Caco-2 (cell line): ENCODE measurements at regions of chr15 and their contacts with region 1.

Region 1: GRCh38 chr15:57561041-57561711 is 30.5 kb upstream of the MYZAP start:
- DNase-seq: peak; percentile 68 to 81
- H3K4me3 ChIP-seq: no peak overlapping the region
- H3K4me3 Mint-ChIP-seq: no peak overlapping the region
- H3K27ac Mint-ChIP-seq: no peak overlapping the region
- H3K4me1 ChIP-seq: peaks cover 11% of the 10 kb centered on the region
- H3K4me1 Mint-ChIP-seq: peaks cover 7% of the 10 kb centered on the region
- H3K27me3 ChIP-seq: no peaks in the 10 kb centered on the region
- H3K27me3 Mint-ChIP-seq: no peaks in the 10 kb centered on the region
- CTCF ChIP-seq: peak; percentile 81 to 85

Region 2: DNA sequence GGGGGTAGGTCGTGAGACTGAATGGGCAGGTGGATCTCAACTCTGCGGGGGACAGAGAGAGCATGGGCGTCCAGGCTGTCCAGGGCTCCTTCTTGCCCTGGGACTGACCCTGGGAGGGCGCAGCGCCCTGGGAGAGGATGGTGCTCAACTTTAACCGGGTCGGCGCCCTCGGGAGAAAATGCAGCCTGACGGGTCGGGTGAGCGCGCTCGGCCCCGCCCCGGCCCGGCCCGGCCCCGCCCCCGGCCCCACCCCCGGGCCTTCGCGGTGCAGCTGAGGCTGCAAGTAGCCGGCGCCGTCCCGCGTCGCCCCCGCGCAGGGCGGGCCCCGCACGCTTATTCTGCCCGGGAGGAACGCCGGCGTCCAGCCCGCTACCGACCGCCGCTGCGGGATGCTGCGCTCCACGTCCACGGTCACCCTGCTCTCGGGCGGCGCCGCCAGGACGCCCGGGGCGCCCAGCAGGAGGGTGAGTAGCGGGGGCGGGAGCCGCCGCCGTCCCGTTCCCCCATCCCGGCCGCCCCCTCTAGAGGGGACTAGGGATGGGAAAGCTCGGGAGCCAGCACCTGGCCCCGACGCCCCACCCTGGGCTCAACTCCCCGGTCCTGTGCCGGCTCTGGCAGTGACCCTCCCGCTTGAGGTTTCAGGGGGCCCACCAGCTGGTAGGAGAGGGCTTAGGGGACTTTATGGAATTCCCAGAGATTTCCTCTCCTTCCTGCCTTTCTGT is 30.6 kb after region 1 on chr15 and contains the start of gene MYZAP:
- CTCF ChIA-PET with region 1: interaction called, 3 read pairs
- POLR2A ChIA-PET with region 1: no interaction called
- intact Hi-C with region 1: loop called (anchors 1 kb)
- DNase-seq: peak; percentile 80 to 81
- H3K4me3 ChIP-seq: peak within 1 kb of the TSS; percentile 59
- H3K4me3 Mint-ChIP-seq: peak within 1 kb of the TSS; percentile 77
- H3K27ac Mint-ChIP-seq: no peak within 1 kb of the TSS
- H3K4me1 ChIP-seq: peaks cover 8% of the 10 kb centered on the region; the same call in 1 of the 2 replicates
- H3K4me1 Mint-ChIP-seq: peaks cover 19% of the 10 kb centered on the region
- H3K27me3 ChIP-seq: no peaks in the 10 kb centered on the region
- H3K27me3 Mint-ChIP-seq: no peaks in the 10 kb centered on the region
- CTCF ChIP-seq: no peak
- total RNA-seq, gene MYZAP: 4.3 and 6.4 TPM in 2 replicates

Region 3: DNA sequence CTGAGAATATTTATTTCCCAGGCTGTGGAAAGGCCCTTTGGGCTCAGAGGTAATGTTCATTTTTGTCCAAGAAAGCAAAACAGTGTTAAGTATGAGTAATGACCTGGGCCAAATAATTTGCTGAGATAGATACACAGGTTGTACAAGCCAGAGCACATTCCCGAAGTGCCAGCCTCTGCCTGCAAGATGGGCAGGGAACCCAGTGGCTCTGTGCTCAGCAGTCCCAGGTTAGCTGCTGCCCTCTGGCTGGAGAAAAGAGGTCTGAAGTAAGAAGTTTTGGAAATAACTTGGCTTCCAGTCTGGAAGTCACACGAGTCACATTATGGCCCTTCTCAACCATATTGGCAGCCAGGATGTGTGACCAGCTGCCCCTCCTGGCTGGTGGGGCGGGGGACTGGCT is 50.8 kb after region 1 on chr15:
- CTCF ChIA-PET with region 1: interaction called, 7 read pairs
- POLR2A ChIA-PET with region 1: no interaction called
- intact Hi-C with region 1: loop called (anchors 1 kb)
- DNase-seq: peak; percentile 38 to 39
- H3K4me3 ChIP-seq: no peak overlapping the region
- H3K4me3 Mint-ChIP-seq: no peak overlapping the region
- H3K27ac Mint-ChIP-seq: no peak overlapping the region
- H3K4me1 ChIP-seq: no peaks in the 10 kb centered on the region
- H3K4me1 Mint-ChIP-seq: no peaks in the 10 kb centered on the region
- H3K27me3 ChIP-seq: no peaks in the 10 kb centered on the region
- H3K27me3 Mint-ChIP-seq: no peaks in the 10 kb centered on the region
- CTCF ChIP-seq: peak in 1 of 2 experiments; percentile 21

Region 4: GRCh38 chr15:57640935-57641682 is 79.9 kb after region 1 on chr15:
- CTCF ChIA-PET with region 1: interaction called, 4 read pairs
- POLR2A ChIA-PET with region 1: no interaction called
- intact Hi-C with region 1: loop called (anchors 1 kb)
- DNase-seq: peak in 1 of 2 experiments; percentile 44
- H3K4me3 ChIP-seq: no peak overlapping the region
- H3K4me3 Mint-ChIP-seq: no peak overlapping the region
- H3K27ac Mint-ChIP-seq: no peak overlapping the region
- H3K4me1 ChIP-seq: no peaks in the 10 kb centered on the region
- H3K4me1 Mint-ChIP-seq: no peaks in the 10 kb centered on the region
- H3K27me3 ChIP-seq: no peaks in the 10 kb centered on the region
- H3K27me3 Mint-ChIP-seq: no peaks in the 10 kb centered on the region
- CTCF ChIP-seq: peak; percentile 38 to 65

Region 5: GRCh38 chr15:57655809-57656208 is 94.6 kb after region 1 on chr15:
- CTCF ChIA-PET with region 1: interaction called, 7 read pairs
- POLR2A ChIA-PET with region 1: no interaction called
- intact Hi-C with region 1: loop called (anchors 5 kb)
- DNase-seq: no peak
- H3K4me3 ChIP-seq: no peak overlapping the region
- H3K4me3 Mint-ChIP-seq: no peak overlapping the region
- H3K27ac Mint-ChIP-seq: no peak overlapping the region
- H3K4me1 ChIP-seq: no peaks in the 10 kb centered on the region
- H3K4me1 Mint-ChIP-seq: no peaks in the 10 kb centered on the region
- H3K27me3 ChIP-seq: no peaks in the 10 kb centered on the region
- H3K27me3 Mint-ChIP-seq: no peaks in the 10 kb centered on the region
- CTCF ChIP-seq: no peak

Region 6: GRCh38 chr15:57732526-57733331 is 171.6 kb after region 1 on chr15:
- CTCF ChIA-PET with region 1: no interaction called
- POLR2A ChIA-PET with region 1: no interaction called
- intact Hi-C with region 1: loop called (anchors 10 kb)
- DNase-seq: peak in 1 of 2 experiments; percentile 66
- H3K4me3 ChIP-seq: no peak overlapping the region
- H3K4me3 Mint-ChIP-seq: no peak overlapping the region
- H3K27ac Mint-ChIP-seq: no peak overlapping the region
- H3K4me1 ChIP-seq: no peaks in the 10 kb centered on the region
- H3K4me1 Mint-ChIP-seq: no peaks in the 10 kb centered on the region
- H3K27me3 ChIP-seq: no peaks in the 10 kb centered on the region
- H3K27me3 Mint-ChIP-seq: no peaks in the 10 kb centered on the region
- CTCF ChIP-seq: peak; percentile 68 to 76

Region 7: DNA sequence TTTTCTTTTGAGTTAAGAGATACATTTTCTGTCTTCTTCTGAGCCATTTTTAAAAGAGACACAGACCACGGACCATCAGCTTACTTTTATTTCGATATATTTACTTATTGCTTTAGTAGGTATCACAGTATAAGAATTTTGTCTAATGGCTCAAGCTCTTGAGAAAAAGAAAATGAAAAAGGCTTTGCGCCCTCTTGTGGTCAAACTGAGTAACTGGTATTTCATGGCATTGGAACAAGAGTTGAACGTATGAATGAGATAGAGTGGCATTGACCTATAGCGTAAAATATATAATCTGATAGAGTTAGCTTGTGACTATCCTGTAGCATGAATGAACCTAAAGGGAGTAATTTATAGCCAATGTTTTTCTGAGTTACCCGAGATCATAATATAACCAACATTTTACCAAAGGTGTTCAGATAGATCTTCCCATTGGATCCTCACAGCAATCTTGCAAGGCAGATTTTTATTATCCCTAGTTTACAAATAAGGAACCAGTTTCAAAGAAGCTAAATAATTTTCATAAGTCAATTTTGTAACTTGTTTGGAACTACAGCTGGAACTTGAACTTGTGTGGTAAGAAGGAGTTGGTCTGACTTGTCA is 300.0 kb after region 1 on chr15:
- CTCF ChIA-PET with region 1: no interaction called
- POLR2A ChIA-PET with region 1: no interaction called
- intact Hi-C with region 1: loop called (anchors 1 kb)
- DNase-seq: peak in 1 of 2 experiments; percentile 50
- H3K4me3 ChIP-seq: no peak overlapping the region
- H3K4me3 Mint-ChIP-seq: no peak overlapping the region
- H3K27ac Mint-ChIP-seq: no peak overlapping the region
- H3K4me1 ChIP-seq: no peaks in the 10 kb centered on the region
- H3K4me1 Mint-ChIP-seq: no peaks in the 10 kb centered on the region
- H3K27me3 ChIP-seq: no peaks in the 10 kb centered on the region
- H3K27me3 Mint-ChIP-seq: peaks cover 27% of the 10 kb centered on the region
- CTCF ChIP-seq: peak; percentile 44 to 55